Posterior vena cava (tissue), 2 donors: ENCODE measurements at regions of chr2 and their contacts with region 1.

Region 1: DNA sequence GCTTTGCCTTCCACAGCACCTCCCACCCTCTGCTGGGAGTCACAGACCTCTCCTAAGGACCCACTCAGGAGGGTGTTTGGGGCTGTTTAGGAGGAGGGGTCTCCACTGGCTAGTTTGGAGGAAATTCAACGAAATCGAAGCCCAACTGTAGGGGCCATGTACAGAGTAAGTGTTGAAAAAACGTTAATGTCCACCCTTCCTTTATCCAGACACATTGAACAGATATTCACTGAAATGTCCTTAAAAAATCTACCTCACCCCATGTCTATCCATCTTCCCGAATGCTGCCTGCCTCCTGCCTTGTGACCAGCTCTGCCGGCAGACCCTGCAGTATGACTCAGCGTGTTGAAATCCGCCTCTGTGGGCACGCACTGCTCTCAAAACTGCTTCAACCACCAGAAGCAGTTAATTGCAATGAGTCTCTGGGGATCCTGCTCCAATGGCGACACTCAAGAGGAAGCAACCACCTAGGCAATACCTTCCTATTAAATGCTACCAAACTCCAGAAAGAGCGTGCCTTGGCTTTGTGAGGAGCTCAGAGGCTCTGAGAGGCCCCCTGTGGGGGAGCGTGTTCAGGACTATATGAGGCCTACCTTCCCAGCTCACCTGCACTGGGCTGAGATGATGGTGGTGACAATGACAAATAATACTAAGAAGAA is 61.4 kb upstream of the RTN4 start:
- DNase-seq: peak; percentile 94

Region 2: DNA sequence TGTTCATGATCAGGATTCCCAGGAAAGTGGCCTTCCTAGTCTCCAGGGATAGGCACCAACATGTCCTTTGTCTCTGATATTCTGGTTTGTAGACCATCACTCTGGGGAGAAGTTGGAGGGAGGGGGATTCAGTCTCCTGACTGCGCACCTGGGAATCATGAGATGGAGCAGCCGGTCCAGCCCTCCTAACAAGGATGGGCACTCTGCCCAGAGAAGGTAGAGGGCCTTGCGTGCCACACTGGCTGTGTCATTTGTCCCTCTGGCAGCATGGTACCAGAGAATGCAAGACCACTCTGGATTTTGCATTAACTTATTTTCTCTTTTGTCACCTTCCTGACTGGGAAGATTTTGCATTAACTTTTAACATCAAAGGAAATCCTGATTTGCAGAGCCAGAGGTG is 463.4 kb before region 1 on chr2:
- intact Hi-C with region 1: loop called in 1 of 2 experiments (anchors 5 kb)
- DNase-seq: no peak

Region 3: GRCh38 chr2:55168221-55169154 is 56.8 kb after region 1 on chr2:
- intact Hi-C with region 1: loop called in 1 of 2 experiments (anchors 10 kb)
- DNase-seq: peak; percentile 81

Region 4: GRCh38 chr2:55196506-55196905 is 84.8 kb after region 1 on chr2:
- intact Hi-C with region 1: no loop called
- DNase-seq: no peak